ENCODE measurements at regions of chr4 and their contacts with region 1.

Region 1: GRCh38 chr4:121252224-121252806 is 88.2 kb upstream of the TNIP3 start:
- DNase-seq: peak in 41 of 42 donors; percentile 52 to 90 (median 75)

Region 2: GRCh38 chr4:121192480-121192879 is 59.8 kb before region 1 on chr4:
- intact Hi-C with region 1: loop called (anchors 2 kb)
- DNase-seq: peak in 11 of 42 donors; percentile 3 to 42 (median 21)